Natural killer cell (primary cell): ENCODE measurements at regions of chrX and their contacts with region 1.

Region 1: GRCh38 chrX:47458528-47458927 is 24.5 kb downstream of the ZNF41 start:
- DNase-seq: peak; percentile 55 to 56
- ATAC-seq: peak; percentile 44 to 90 (median 86)
- H3K4me3 ChIP-seq: no peak overlapping the region
- H3K4me3 Mint-ChIP-seq: peak overlapping the region; percentile 50
- H3K27ac ChIP-seq: peak overlapping the region; percentile 19
- H3K27ac Mint-ChIP-seq: peak overlapping the region; percentile 30 to 52
- H3K4me1 ChIP-seq: peaks cover 8% of the 10 kb centered on the region
- H3K4me1 Mint-ChIP-seq: peaks cover 8 to 17% of the 10 kb centered on the region in 2 donors
- H3K27me3 ChIP-seq: no peaks in the 10 kb centered on the region
- H3K27me3 Mint-ChIP-seq: no peaks in the 10 kb centered on the region
- CTCF ChIP-seq: no peak

Region 2: DNA sequence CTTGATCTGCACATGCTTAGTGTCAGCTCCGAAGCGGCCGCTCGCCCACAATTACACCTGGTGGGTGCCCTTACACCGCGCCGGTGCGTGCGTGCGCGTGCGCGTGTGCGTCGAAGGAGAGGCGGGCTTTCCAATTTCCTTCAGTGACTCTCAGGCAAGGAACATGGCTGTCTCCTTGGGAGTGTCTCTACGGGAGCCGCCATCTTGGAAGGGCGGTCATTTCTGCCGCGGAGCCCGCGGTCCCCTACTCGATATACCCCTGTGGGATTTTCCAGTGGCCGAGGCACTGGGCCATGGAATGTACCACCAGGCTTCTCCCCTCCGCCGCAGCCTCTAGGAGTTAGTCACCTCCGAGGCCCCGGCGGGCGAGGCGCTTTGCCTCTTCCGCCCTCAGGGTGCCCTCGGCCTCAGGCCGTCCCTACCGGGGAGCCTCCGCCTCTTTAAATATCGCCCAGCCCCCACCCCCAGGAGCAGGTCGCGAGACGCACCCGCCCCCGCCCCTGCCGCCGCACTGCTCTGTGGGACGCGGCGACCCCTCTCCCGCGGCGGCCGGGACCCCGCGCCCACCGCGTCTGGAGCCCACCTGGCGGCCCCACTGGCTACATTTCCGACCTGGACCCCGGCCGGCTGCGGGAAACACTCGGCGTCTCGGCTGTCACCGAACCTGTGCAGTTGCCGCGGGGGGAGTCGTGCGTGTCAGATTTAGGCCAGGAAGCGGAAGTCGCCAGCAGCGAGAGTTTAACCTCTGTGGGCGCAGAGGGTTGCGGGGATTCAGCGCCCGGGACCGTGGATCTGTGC is 24.2 kb after region 1 on chrX and contains the start of gene ZNF41:
- intact Hi-C with region 1: loop called (anchors 2 kb)
- DNase-seq: peak; percentile 64 to 90
- ATAC-seq: peak; percentile 78 to 93 (median 84)
- H3K4me3 ChIP-seq: peak within 1 kb of the TSS; percentile 93
- H3K4me3 Mint-ChIP-seq: peak within 1 kb of the TSS; percentile 88
- H3K27ac ChIP-seq: peak within 1 kb of the TSS; percentile 96
- H3K27ac Mint-ChIP-seq: peak within 1 kb of the TSS; percentile 85
- H3K4me1 ChIP-seq: peaks cover 11% of the 10 kb centered on the region
- H3K4me1 Mint-ChIP-seq: peaks cover 21 to 28% of the 10 kb centered on the region in 2 donors
- H3K27me3 ChIP-seq: no peaks in the 10 kb centered on the region
- H3K27me3 Mint-ChIP-seq: no peaks in the 10 kb centered on the region
- CTCF ChIP-seq: no peak
- total RNA-seq, gene ZNF41: 7.9 to 11.8 (median 10.0) TPM